ENCODE measurements at regions of chr19 and their contacts with region 1.

Region 1: GRCh38 chr19:7109678-7110289 is 40.3 kb downstream of the ZNF557 start:
- DNase-seq: no peak
- H3K4me3 ChIP-seq: no peak overlapping the region
- H3K27me3 ChIP-seq: no peaks in the 10 kb centered on the region
- CTCF ChIP-seq: no peak

Region 2: GRCh38 chr19:7098701-7099596 is 10.8 kb before region 1 on chr19:
- CTCF ChIA-PET with region 1: interaction called, 15 read pairs
- POLR2A ChIA-PET with region 1: no interaction called
- DNase-seq: peak; percentile 63
- H3K4me3 ChIP-seq: peak overlapping the region; percentile 91
- H3K27me3 ChIP-seq: no peaks in the 10 kb centered on the region
- CTCF ChIP-seq: no peak

Region 3: GRCh38 chr19:7130043-7130442 is 20.3 kb after region 1 on chr19:
- CTCF ChIA-PET with region 1: no interaction called
- POLR2A ChIA-PET with region 1: no interaction called
- DNase-seq: no peak
- H3K4me3 ChIP-seq: no peak overlapping the region
- H3K27me3 ChIP-seq: no peaks in the 10 kb centered on the region
- CTCF ChIP-seq: no peak

Region 4: DNA sequence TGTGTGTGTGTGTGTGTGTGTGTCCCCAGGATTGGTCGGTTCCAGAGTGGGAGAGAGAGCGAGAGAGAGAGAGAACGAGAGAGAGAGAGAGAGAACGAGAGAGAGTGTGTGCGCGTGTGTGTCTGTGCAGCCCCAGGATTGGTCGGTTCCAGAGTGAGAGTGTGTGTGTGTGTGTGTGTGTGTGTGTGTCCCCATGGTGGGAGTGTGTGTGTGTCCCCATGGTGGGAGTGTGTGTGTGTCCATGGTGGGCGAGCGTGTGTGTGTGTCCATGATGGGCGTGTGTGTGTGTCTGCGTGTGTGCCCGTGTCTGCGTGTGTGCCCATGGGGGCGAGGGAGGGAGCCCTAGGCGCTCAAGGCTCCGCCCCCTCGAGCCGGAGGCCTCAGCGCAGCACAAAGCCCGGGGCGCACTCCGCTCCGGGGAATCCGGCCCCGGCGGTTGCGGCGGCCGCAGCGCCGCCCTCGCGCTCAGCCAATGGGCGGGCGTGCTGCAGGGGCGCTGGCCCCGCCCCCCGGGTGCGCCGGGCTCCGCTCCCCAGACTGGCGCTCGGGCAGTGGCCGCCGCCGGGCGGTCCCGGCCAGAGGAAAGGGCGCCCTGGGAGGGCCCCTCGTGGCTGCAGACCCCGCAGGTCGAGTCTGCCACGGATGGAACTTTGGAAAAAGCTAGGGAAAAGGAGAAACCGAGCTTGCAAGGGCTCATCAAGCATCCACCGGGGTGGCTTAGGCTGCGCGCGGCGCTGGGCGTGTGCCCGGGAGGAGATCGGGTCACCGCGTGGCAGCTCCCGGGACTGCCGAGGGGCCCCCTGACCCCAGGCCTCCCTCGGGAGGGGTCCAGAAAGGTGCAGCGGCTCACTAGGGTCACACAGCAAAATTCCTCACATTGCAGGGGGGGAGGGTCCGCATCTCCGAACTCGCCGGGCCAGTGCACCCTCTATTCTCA is 88.2 kb after region 1 on chr19:
- CTCF ChIA-PET with region 1: no interaction called
- POLR2A ChIA-PET with region 1: no interaction called
- DNase-seq: peak; percentile 43
- H3K4me3 ChIP-seq: peak overlapping the region; percentile 68
- H3K27me3 ChIP-seq: no peaks in the 10 kb centered on the region
- CTCF ChIP-seq: no peak

Measured in BJ (cell line).